ENCODE measurements at regions of chr14 and their contacts with region 1.

Region 1: GRCh38 chr14:69398053-69398817 is at the starts of genes ERH and SLC39A9:
- DNase-seq: peak; percentile 97
- ATAC-seq: peak; percentile 89
- H3K4me3 Mint-ChIP-seq: peak within 1 kb of the TSS; percentile 95
- H3K27ac Mint-ChIP-seq: peak within 1 kb of the TSS; percentile 100
- H3K4me1 Mint-ChIP-seq: peaks cover 63% of the 10 kb centered on the region
- H3K27me3 Mint-ChIP-seq: no peaks in the 10 kb centered on the region
- total RNA-seq, gene ERH: 343 to 385 TPM
- total RNA-seq, gene SLC39A9: 40.1 to 42.6 TPM

Region 2: DNA sequence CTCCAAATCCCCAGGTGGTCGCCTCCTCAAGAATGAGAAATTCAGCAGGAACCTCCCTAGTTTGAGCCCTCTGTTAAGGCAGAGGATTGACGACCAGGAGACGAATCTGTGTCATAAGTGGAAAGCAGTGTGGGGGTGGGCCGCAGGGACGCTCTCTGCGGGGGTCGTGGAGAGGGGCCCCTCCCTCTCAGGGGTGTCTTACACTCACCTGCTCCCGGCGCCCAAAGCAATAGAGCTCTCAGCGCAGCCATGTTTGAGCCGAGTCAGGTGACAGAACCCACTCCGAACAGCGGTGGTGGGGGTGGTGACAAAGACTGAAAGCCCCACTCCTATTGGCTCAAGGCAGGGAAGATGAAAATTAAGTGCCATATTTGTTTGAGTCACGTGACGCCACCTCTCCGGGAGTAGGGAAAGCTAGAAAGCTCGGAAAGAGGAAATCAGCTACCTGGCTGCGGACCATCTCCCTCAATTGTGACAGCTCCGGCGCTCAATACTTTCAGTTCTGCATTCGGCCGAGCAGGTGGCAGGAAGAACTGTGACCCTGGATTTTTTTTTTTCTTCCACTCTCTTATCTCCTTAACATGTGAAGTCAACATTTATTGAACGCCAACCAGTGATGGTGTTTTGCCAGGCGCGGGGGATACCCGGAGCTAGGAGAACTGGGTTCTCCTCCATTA is 1581.8 kb before region 1 on chr14 and contains the start of gene ZFYVE26:
- CTCF ChIA-PET with region 1: no interaction called
- POLR2A ChIA-PET with region 1: no interaction called
- intact Hi-C with region 1: loop called (anchors 5 kb)
- DNase-seq: peak; percentile 95
- ATAC-seq: peak; percentile 89
- H3K4me3 Mint-ChIP-seq: peak within 1 kb of the TSS; percentile 89
- H3K27ac Mint-ChIP-seq: peak within 1 kb of the TSS; percentile 92
- H3K4me1 Mint-ChIP-seq: peaks cover 45% of the 10 kb centered on the region
- H3K27me3 Mint-ChIP-seq: no peaks in the 10 kb centered on the region
- total RNA-seq, gene ZFYVE26: 13.0 to 14.2 TPM

Region 3: DNA sequence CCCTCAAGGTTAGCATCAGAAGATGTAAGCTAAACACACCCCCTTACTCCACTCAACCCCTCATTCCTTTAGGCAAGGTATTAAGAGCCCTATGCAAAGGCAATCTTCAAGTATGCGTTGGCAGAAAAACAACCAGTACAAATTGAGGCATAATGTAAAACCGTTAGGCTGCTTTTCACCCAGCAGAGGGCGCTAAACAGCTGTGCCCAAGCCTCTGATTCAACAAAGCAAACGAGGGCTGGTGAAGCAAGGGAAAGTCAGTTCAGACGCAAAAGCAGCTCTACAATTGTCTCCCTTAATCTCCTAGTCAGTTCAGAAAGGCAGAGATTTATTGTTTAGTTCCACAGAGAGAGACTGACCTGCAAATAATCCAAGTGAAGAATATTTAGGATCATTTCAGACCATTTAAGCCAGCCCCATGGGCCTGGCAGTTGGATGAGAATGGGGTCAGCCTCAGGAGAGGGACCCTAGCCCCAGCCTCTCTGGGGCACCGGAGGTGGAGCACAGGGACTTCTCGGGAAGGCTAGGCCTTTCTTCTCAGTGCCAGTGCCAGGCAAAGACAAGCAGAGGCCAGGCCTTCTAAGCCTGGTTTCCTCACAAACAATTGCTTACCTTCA is 268.9 kb before region 1 on chr14:
- CTCF ChIA-PET with region 1: no interaction called
- POLR2A ChIA-PET with region 1: interaction called, 3 read pairs
- intact Hi-C with region 1: loop called (anchors 1 to 5 kb)
- DNase-seq: peak; percentile 85
- ATAC-seq: peak; percentile 77
- H3K4me3 Mint-ChIP-seq: no peak overlapping the region
- H3K27ac Mint-ChIP-seq: peak overlapping the region; percentile 37
- H3K4me1 Mint-ChIP-seq: peaks cover 72% of the 10 kb centered on the region
- H3K27me3 Mint-ChIP-seq: no peaks in the 10 kb centered on the region

Region 4: GRCh38 chr14:69358233-69358963 is 39.8 kb before region 1 on chr14:
- CTCF ChIA-PET with region 1: interaction called, 3 read pairs
- POLR2A ChIA-PET with region 1: interaction called, 9 read pairs
- intact Hi-C with region 1: loop called in 1 of 2 experiments (anchors 1 kb)
- DNase-seq: peak; percentile 81
- ATAC-seq: peak; percentile 91
- H3K4me3 Mint-ChIP-seq: no peak overlapping the region
- H3K27ac Mint-ChIP-seq: peak overlapping the region; percentile 63
- H3K4me1 Mint-ChIP-seq: peaks cover 36% of the 10 kb centered on the region
- H3K27me3 Mint-ChIP-seq: peaks cover 3% of the 10 kb centered on the region

Region 5: DNA sequence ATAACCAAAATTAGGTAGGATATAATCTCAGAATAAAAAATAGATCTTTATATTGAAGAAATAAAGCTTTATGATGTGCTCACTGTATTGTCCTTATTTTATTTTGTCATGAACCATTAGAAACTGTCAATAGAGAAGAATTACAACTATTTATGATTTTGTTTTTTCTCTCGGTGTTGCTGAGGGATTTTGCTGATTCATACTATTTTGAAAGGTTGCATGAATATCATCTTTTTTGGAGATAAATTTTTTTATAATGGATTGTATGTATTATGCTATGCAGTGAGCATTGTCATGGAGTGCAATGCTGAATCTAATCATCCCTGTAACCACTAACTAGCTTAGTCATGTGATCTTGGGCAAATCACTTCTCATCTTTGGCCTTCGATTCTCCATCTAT is 15.2 kb after region 1 on chr14:
- CTCF ChIA-PET with region 1: no interaction called
- POLR2A ChIA-PET with region 1: no interaction called
- intact Hi-C with region 1: no loop called
- DNase-seq: no peak
- ATAC-seq: no peak
- H3K4me3 Mint-ChIP-seq: no peak overlapping the region
- H3K27ac Mint-ChIP-seq: no peak overlapping the region
- H3K4me1 Mint-ChIP-seq: peaks cover 16% of the 10 kb centered on the region
- H3K27me3 Mint-ChIP-seq: no peaks in the 10 kb centered on the region

Region 6: DNA sequence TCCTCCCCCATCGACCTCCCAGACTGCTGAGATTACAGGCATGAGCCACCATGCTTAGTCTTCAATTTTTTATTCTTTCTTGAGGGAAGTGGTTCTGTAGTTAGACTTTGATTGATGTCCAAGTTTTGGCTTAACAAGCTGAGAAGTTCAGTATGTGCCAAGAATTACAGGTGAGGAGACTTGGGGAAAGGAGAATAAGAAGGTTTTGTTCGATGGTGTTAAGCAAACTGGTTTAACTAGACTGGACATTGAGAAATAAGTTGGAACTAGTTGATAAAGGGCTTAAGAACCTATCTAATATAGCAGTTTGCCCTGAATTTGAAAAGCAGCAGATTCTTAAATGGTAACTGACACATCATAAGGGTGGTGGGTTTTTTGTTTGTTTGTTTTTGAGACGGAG is 53.7 kb after region 1 on chr14:
- CTCF ChIA-PET with region 1: no interaction called
- POLR2A ChIA-PET with region 1: no interaction called
- intact Hi-C with region 1: no loop called
- DNase-seq: no peak
- ATAC-seq: no peak
- H3K4me3 Mint-ChIP-seq: no peak overlapping the region
- H3K27ac Mint-ChIP-seq: no peak overlapping the region
- H3K4me1 Mint-ChIP-seq: no peaks in the 10 kb centered on the region
- H3K27me3 Mint-ChIP-seq: no peaks in the 10 kb centered on the region

Region 7: DNA sequence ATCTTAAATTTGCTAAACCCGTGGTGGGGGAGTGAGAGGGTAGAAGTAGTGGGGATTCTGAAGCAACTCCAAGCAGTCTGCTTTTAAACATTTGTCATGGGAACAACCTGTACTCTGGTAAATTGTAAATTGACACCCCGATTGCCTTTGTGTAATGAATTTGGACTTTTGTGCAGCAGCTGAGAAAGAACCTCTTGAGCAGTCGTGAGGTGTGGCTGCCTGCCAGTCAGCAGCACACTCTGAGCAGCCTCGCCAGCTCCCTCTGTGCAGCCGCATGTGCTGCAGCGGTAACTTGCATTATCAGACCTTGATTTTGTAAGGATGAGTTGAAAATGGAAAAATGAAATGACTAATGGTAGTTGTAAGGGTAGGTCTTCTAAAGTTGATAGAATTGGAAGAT is 287.5 kb after region 1 on chr14:
- CTCF ChIA-PET with region 1: no interaction called
- POLR2A ChIA-PET with region 1: no interaction called
- intact Hi-C with region 1: loop called in 1 of 2 experiments (anchors 5 kb)
- DNase-seq: peak; percentile 78
- ATAC-seq: peak; percentile 74
- H3K4me3 Mint-ChIP-seq: peak overlapping the region; percentile 49
- H3K27ac Mint-ChIP-seq: peak overlapping the region; percentile 94
- H3K4me1 Mint-ChIP-seq: peaks cover 81% of the 10 kb centered on the region
- H3K27me3 Mint-ChIP-seq: no peaks in the 10 kb centered on the region

Region 8: GRCh38 chr14:70600382-70601157 is 1202.3 kb after region 1 on chr14 and contains the start of gene MED6:
- CTCF ChIA-PET with region 1: no interaction called
- POLR2A ChIA-PET with region 1: no interaction called
- intact Hi-C with region 1: loop called in 1 of 2 experiments (anchors 2 kb)
- DNase-seq: peak; percentile 95
- ATAC-seq: peak; percentile 100
- H3K4me3 Mint-ChIP-seq: peak within 1 kb of the TSS; percentile 100
- H3K27ac Mint-ChIP-seq: peak within 1 kb of the TSS; percentile 96
- H3K4me1 Mint-ChIP-seq: peaks cover 23% of the 10 kb centered on the region
- H3K27me3 Mint-ChIP-seq: peaks cover 4% of the 10 kb centered on the region
- total RNA-seq, gene MED6: 51.2 to 56.1 TPM